ENCODE measurements at regions of chr17 and their contacts with region 1.

Region 1: GRCh38 chr17:50547035-50547735 is at the start of gene SPATA20:
- H3K4me3 Mint-ChIP-seq: peak within 1 kb of the TSS; percentile 81
- H3K27ac Mint-ChIP-seq: peak within 1 kb of the TSS; percentile 83
- H3K4me1 Mint-ChIP-seq: peaks cover 39% of the 10 kb centered on the region
- H3K27me3 Mint-ChIP-seq: peaks cover 14% of the 10 kb centered on the region

Region 2: GRCh38 chr17:50507871-50508572 is 39.2 kb before region 1 on chr17 and contains the start of gene MYCBPAP:
- intact Hi-C with region 1: no loop called
- H3K4me3 Mint-ChIP-seq: peak within 1 kb of the TSS; percentile 73
- H3K27ac Mint-ChIP-seq: peak within 1 kb of the TSS; percentile 28
- H3K4me1 Mint-ChIP-seq: peaks cover 32% of the 10 kb centered on the region
- H3K27me3 Mint-ChIP-seq: peaks cover 19% of the 10 kb centered on the region

Region 3: DNA sequence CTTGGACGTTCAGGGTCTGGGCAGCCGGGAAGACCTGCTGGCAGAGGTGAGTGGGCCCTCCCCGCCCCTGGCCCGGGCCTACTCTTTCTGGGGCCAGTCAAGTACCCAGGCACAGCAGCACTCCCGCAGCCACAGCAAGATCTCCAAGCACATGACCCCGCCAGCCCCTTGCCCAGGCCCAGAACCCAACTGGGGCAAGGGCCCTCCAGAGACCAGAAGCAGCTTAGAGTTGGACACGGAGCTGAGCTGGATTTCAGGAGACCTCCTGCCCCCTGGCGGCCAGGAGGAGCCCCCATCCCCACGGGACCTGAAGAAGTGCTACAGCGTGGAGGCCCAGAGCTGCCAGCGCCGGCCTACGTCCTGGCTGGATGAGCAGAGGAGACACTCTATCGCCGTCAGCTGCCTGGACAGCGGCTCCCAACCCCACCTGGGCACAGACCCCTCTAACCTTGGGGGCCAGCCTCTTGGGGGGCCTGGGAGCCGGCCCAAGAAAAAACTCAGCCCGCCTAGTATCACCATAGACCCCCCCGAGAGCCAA is 78.9 kb after region 1 on chr17:
- intact Hi-C with region 1: loop called (anchors 2 kb)
- H3K4me3 Mint-ChIP-seq: no peak overlapping the region
- H3K27ac Mint-ChIP-seq: no peak overlapping the region
- H3K4me1 Mint-ChIP-seq: peaks cover 82% of the 10 kb centered on the region
- H3K27me3 Mint-ChIP-seq: peaks cover 49% of the 10 kb centered on the region

Region 4: DNA sequence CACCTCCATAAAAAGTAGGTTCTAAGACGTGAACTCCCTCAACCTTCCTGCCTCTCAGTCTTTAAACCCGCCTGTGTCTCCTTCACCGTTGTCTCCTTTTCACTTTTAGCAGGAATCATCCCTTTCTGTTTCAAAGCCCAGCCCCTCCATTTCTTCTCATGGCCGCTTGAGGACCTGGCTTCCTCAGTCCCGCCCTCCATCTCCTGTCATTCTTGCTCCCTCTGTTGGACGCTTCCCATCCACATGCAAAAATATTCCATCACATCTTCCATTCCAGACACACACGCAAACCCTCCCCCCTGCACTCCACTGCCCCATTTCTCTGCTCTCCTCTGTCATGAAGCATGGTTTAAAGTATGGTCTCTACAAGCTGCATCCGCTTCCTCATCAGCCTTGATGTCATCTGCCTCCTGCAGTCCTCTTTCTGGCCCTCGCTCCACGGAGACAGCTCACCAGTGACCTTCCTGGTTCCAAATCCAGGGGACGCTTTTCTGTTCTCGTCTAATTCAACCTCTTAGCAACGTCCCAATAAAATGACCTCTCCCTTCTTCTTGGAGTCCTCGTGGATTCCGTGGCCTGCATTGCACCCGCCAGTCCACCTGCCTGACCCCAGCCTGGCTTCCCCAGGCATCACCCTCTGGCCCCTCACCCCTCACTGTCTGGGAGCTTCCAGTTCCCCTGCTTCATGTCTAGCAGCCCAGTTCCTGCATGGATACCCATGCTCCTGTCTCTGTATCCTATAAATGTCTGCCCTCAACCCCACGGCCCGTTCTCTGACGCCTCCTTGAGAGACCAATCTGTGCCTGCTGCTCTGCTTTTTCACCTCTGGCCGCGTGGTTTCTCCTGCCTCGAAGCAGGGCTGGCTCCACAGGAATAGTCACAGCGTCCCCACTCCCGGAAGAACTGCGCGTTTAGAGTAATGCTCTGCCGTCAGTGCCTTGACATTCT is 134.4 kb after region 1 on chr17:
- intact Hi-C with region 1: loop called (anchors 2 kb)
- H3K4me3 Mint-ChIP-seq: peak overlapping the region; percentile 66
- H3K27ac Mint-ChIP-seq: peak overlapping the region; percentile 75
- H3K4me1 Mint-ChIP-seq: peaks cover 26% of the 10 kb centered on the region
- H3K27me3 Mint-ChIP-seq: peaks cover 7% of the 10 kb centered on the region

Region 5: DNA sequence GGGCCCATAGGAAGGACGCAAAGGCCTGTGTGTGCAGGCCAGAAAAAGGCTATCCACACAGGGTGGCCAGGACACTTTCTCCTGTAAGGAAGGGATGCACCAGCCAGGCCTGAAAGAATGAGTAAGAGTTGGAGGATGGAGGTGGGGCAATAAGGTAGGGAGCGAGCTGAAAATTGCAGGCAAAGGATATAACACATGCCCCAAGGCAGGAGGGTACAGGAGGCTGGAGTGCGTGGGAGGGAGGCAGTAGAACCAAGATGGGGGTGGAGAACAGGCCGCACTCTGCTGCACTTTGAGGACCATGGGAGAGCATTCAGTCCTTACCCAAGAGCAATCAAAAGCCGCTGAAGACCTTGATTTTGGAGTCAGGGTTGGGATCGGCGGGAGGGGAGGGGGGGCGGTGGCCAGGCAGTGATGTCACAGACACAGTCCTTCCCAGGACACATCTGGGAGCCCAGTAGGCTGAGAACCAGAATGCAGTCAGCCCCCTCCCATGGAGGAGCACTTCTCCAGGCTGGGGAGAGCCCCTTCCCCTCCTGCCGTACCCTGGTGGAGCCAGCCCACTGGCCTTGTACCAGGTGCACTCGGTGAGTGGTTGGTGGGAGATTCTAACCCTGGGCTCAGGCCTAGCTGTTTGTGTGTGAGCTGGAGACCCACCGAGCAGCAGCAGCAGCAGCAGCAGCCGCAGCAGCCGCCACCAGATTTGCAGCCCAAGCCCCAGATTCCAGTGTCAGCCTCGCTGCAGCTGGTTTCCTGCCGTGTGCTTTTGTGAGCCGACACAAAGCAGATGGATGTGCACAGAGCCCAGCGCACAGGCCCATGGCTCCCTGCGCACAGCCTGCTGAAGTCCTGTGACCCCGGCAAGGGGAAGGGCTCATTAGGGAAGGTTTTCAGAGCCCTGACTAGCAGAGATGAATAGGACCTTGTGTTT is 143.0 kb after region 1 on chr17:
- intact Hi-C with region 1: loop called (anchors 1 kb)
- H3K4me3 Mint-ChIP-seq: no peak overlapping the region
- H3K27ac Mint-ChIP-seq: no peak overlapping the region
- H3K4me1 Mint-ChIP-seq: peaks cover 13% of the 10 kb centered on the region
- H3K27me3 Mint-ChIP-seq: no peaks in the 10 kb centered on the region

Region 6: GRCh38 chr17:50707289-50708049 is 160.3 kb after region 1 on chr17 and contains the start of gene ANKRD40:
- intact Hi-C with region 1: loop called (anchors 5 kb)
- H3K4me3 Mint-ChIP-seq: peak within 1 kb of the TSS; percentile 92
- H3K27ac Mint-ChIP-seq: peak within 1 kb of the TSS; percentile 97
- H3K4me1 Mint-ChIP-seq: peaks cover 29% of the 10 kb centered on the region
- H3K27me3 Mint-ChIP-seq: no peaks in the 10 kb centered on the region

Region 7: DNA sequence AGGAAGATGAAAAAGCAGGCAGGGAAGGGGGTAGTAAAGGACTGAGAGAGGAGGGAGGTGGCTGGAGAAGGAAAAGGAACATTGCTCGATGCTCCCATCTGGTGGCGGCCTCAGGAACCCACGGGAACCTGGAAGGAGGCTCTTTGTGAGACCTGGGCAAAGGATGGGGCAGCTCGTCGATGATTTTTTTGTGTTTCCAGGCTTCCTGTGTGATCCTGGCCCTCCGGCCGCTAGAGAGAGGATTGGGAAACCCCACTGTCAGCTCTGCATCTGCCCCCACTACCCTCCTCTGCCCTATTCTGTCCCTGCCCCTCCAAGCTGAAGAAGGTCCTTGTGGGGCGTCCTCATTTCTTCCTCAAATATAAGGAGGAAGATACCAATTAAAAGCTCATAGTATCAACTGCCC is 294.8 kb after region 1 on chr17:
- intact Hi-C with region 1: loop called (anchors 1 kb)
- H3K4me3 Mint-ChIP-seq: no peak overlapping the region
- H3K27ac Mint-ChIP-seq: no peak overlapping the region
- H3K4me1 Mint-ChIP-seq: peaks cover 8% of the 10 kb centered on the region
- H3K27me3 Mint-ChIP-seq: no peaks in the 10 kb centered on the region